Endothelial cell of umbilical vein (primary cell): ENCODE measurements at regions of chr20 and their contacts with region 1.

Region 1: GRCh38 chr20:35092524-35093266 is at the start of gene TRPC4AP:
- DNase-seq: peak; percentile 94
- H3K4me3 ChIP-seq: peak within 1 kb of the TSS; percentile 46 to 98 (median 66)
- H3K27ac ChIP-seq: peak within 1 kb of the TSS; percentile 88
- H3K4me1 ChIP-seq: peaks cover 42% of the 10 kb centered on the region
- H3K27me3 ChIP-seq: no peaks in the 10 kb centered on the region
- CTCF ChIP-seq: peak; percentile 97 to 100
- POLR2A ChIP-seq: peak; percentile 94
- total RNA-seq, gene TRPC4AP: 88.3 and 89.0 TPM in 2 replicates

Region 2: DNA sequence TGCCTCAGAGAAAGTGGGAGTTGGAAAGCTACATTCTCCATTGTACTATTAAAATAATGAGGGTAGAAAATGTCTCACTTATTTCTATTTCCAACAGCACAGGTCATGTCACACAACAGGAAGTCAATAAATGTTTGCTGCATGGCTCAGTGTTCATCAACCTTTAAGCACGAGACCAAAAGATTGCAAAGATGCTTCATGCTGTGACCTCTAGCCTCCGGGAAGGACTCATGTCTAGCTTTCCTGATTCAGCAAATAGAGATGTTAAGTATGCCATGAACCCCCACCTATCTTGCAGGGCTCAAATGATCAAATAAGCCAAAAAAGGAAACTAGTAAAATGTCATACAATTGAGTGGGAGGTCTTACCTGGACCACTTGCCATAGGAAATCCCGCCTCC is 324.6 kb before region 1 on chr20:
- CTCF ChIA-PET with region 1: no interaction called
- POLR2A ChIA-PET with region 1: no interaction called
- dilution Hi-C with region 1: no loop called
- intact Hi-C with region 1: no loop called
- DNase-seq: peak; percentile 14
- H3K4me3 ChIP-seq: no peak overlapping the region
- H3K27ac ChIP-seq: no peak overlapping the region
- H3K4me1 ChIP-seq: peaks cover 12% of the 10 kb centered on the region
- H3K27me3 ChIP-seq: no peaks in the 10 kb centered on the region
- CTCF ChIP-seq: no peak
- POLR2A ChIP-seq: no peak

Region 3: GRCh38 chr20:35021063-35021462 is 71.6 kb before region 1 on chr20:
- CTCF ChIA-PET with region 1: interaction called, 3 read pairs
- POLR2A ChIA-PET with region 1: interaction called, 9 read pairs
- dilution Hi-C with region 1: no loop called
- intact Hi-C with region 1: loop called (anchors 1 kb)
- DNase-seq: peak; percentile 77
- H3K4me3 ChIP-seq: no peak overlapping the region
- H3K27ac ChIP-seq: peak overlapping the region; percentile 81
- H3K4me1 ChIP-seq: peaks cover 17% of the 10 kb centered on the region
- H3K27me3 ChIP-seq: no peaks in the 10 kb centered on the region
- CTCF ChIP-seq: no peak
- POLR2A ChIP-seq: no peak

Region 4: GRCh38 chr20:35120012-35120701 is 27.5 kb after region 1 on chr20:
- CTCF ChIA-PET with region 1: interaction called, 64 read pairs
- POLR2A ChIA-PET with region 1: interaction called, 8 read pairs
- dilution Hi-C with region 1: no loop called
- intact Hi-C with region 1: no loop called
- DNase-seq: peak; percentile 72
- H3K4me3 ChIP-seq: no peak overlapping the region
- H3K27ac ChIP-seq: peak overlapping the region; percentile 54
- H3K4me1 ChIP-seq: peaks cover 48% of the 10 kb centered on the region
- H3K27me3 ChIP-seq: no peaks in the 10 kb centered on the region
- CTCF ChIP-seq: no peak
- POLR2A ChIP-seq: no peak

Region 5: DNA sequence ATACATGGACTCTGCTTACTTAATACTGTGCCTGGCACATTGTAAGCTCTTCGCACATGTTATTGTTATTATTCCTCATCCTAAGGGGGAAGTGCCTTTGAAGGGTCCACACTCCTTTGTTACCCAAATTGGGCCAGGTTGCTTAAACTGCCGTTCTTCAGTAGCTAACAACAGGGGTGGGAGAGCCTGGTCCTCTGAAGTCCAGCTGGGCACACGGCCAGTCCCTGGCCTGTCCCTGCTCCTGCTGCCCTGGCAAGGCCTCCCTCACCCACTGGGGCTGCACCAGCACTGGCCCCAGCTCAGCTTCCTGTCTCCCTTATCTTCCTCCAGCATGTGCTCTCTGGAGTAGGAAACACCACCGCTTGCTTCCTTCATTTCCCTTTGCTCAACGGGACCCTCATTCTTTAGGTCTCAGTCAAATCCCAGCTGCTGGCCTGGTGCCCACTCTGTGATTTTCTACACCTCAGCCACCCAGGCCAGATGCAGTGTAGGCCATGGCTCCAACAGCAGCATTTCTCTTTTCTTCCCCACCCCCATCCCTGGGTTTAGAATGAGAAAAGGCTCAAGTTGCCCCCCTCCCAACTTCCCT is 73.6 kb after region 1 on chr20:
- CTCF ChIA-PET with region 1: interaction called, 33 read pairs
- POLR2A ChIA-PET with region 1: no interaction called
- dilution Hi-C with region 1: no loop called
- intact Hi-C with region 1: loop called (anchors 2 kb)
- DNase-seq: peak; percentile 99
- H3K4me3 ChIP-seq: no peak overlapping the region
- H3K27ac ChIP-seq: peak overlapping the region; percentile 59
- H3K4me1 ChIP-seq: peaks cover 27% of the 10 kb centered on the region
- H3K27me3 ChIP-seq: no peaks in the 10 kb centered on the region
- CTCF ChIP-seq: no peak
- POLR2A ChIP-seq: peak; percentile 88

Region 6: GRCh38 chr20:35215066-35215956 is 122.6 kb after region 1 on chr20:
- CTCF ChIA-PET with region 1: interaction called, 31 read pairs
- POLR2A ChIA-PET with region 1: no interaction called
- dilution Hi-C with region 1: no loop called
- intact Hi-C with region 1: no loop called
- DNase-seq: no peak
- H3K4me3 ChIP-seq: no peak overlapping the region
- H3K27ac ChIP-seq: no peak overlapping the region
- H3K4me1 ChIP-seq: peaks cover 5% of the 10 kb centered on the region
- H3K27me3 ChIP-seq: peaks cover 3 to 9% of the 10 kb centered on the region in 2 experiments
- CTCF ChIP-seq: no peak
- POLR2A ChIP-seq: no peak